A673 (cell line): ENCODE measurements at regions of chr17 and their contacts with region 1.

Region 1: GRCh38 chr17:17580662-17581470 is 10.6 kb downstream of the PEMT start:
- DNase-seq: no peak
- H3K4me3 ChIP-seq: no peak overlapping the region
- H3K27ac ChIP-seq: no peak overlapping the region
- H3K4me1 ChIP-seq: no peaks in the 10 kb centered on the region
- H3K27me3 ChIP-seq: no peaks in the 10 kb centered on the region
- CTCF ChIP-seq: no peak

Region 2: GRCh38 chr17:17613708-17614114 is 32.8 kb after region 1 on chr17:
- CTCF ChIA-PET with region 1: no interaction called
- POLR2A ChIA-PET with region 1: interaction called, 28 read pairs
- intact Hi-C with region 1: no loop called
- DNase-seq: peak; percentile 82
- H3K4me3 ChIP-seq: no peak overlapping the region
- H3K27ac ChIP-seq: no peak overlapping the region
- H3K4me1 ChIP-seq: no peaks in the 10 kb centered on the region
- H3K27me3 ChIP-seq: no peaks in the 10 kb centered on the region
- CTCF ChIP-seq: peak; percentile 76

Region 3: GRCh38 chr17:17859909-17860765 is 279.3 kb after region 1 on chr17:
- CTCF ChIA-PET with region 1: no interaction called
- POLR2A ChIA-PET with region 1: no interaction called
- intact Hi-C with region 1: no loop called
- DNase-seq: peak; percentile 73
- H3K4me3 ChIP-seq: no peak overlapping the region
- H3K27ac ChIP-seq: no peak overlapping the region
- H3K4me1 ChIP-seq: peaks cover 10% of the 10 kb centered on the region
- H3K27me3 ChIP-seq: no peaks in the 10 kb centered on the region
- CTCF ChIP-seq: peak; percentile 98

Region 4: GRCh38 chr17:18017958-18018357 is 437.1 kb after region 1 on chr17:
- CTCF ChIA-PET with region 1: no interaction called
- POLR2A ChIA-PET with region 1: no interaction called
- intact Hi-C with region 1: no loop called
- DNase-seq: no peak
- H3K4me3 ChIP-seq: no peak overlapping the region
- H3K27ac ChIP-seq: no peak overlapping the region
- H3K4me1 ChIP-seq: no peaks in the 10 kb centered on the region
- H3K27me3 ChIP-seq: no peaks in the 10 kb centered on the region
- CTCF ChIP-seq: no peak

Region 5: GRCh38 chr17:18278867-18279266 is 698.0 kb after region 1 on chr17:
- CTCF ChIA-PET with region 1: no interaction called
- POLR2A ChIA-PET with region 1: no interaction called
- intact Hi-C with region 1: no loop called
- DNase-seq: no peak
- H3K4me3 ChIP-seq: no peak overlapping the region
- H3K27ac ChIP-seq: no peak overlapping the region
- H3K4me1 ChIP-seq: no peaks in the 10 kb centered on the region
- H3K27me3 ChIP-seq: no peaks in the 10 kb centered on the region
- CTCF ChIP-seq: no peak